AG04450 (cell line): ENCODE measurements at regions of chr3 and their contacts with region 1.

Region 1: GRCh38 chr3:133927540-133928066 is 31.9 kb upstream of the RAB6B start:
- DNase-seq: no peak
- H3K4me3 ChIP-seq: peak overlapping the region; percentile 56
- H3K27ac ChIP-seq: no peak overlapping the region
- H3K27me3 ChIP-seq: no peaks in the 10 kb centered on the region
- CTCF ChIP-seq: peak; percentile 55

Region 2: GRCh38 chr3:133712017-133712416 is 215.6 kb before region 1 on chr3:
- CTCF ChIA-PET with region 1: no interaction called
- POLR2A ChIA-PET with region 1: no interaction called
- DNase-seq: no peak
- H3K4me3 ChIP-seq: no peak overlapping the region
- H3K27ac ChIP-seq: no peak overlapping the region
- H3K27me3 ChIP-seq: peaks cover 12% of the 10 kb centered on the region
- CTCF ChIP-seq: no peak

Region 3: GRCh38 chr3:133821767-133822638 is 105.6 kb before region 1 on chr3:
- CTCF ChIA-PET with region 1: interaction called, 40 read pairs
- POLR2A ChIA-PET with region 1: no interaction called
- DNase-seq: peak; percentile 33
- H3K4me3 ChIP-seq: no peak overlapping the region
- H3K27ac ChIP-seq: no peak overlapping the region
- H3K27me3 ChIP-seq: no peaks in the 10 kb centered on the region
- CTCF ChIP-seq: peak; percentile 45

Region 4: DNA sequence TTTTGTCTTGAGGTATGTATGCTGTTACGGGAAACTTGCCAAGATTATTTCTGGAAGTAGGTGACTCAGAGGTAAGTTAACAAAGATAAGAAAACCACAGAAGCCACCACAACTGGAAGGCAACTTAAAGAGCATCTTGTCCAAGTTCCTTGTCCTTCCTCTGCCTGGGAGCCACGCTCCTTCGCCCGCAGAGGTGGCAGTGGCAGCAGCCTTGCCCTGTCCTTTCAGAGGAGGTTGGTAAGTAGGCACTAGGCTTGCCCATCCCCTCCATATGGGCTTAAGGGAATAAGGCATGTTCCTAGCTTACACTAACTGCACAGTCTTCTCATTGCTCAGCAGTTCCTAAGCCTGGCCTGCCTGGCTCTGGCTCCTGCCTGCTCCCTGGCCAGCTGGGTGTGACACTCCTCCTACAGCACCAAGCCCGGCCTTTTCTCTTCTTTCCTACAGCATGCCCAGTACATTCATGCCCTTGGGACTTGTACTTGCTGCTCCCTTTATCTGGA is 16.1 kb after region 1 on chr3:
- CTCF ChIA-PET with region 1: interaction called, 15 read pairs
- POLR2A ChIA-PET with region 1: no interaction called
- DNase-seq: peak; percentile 87
- H3K4me3 ChIP-seq: no peak overlapping the region
- H3K27ac ChIP-seq: peak overlapping the region; percentile 77
- H3K27me3 ChIP-seq: peaks cover 3% of the 10 kb centered on the region
- CTCF ChIP-seq: no peak

Region 5: DNA sequence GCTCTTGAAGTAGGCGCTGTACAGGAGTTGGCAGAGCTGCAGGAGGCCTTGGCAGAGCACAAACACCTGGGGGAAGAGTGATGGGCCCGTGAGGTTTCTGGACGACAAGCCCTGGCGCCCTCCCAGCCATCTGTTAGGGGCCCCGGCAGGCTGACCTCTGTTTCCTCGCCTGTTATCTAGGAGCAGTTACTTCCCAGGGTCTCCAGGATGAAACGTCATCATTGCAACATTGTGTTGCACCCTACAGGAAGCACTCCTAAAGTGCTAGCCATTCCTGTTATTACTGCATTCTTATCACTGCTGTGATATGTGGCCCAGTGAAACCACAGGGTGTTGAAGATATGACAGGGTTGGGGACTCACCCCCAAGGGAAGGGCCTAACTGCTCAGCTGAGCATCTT is 52.0 kb after region 1 on chr3:
- CTCF ChIA-PET with region 1: no interaction called
- POLR2A ChIA-PET with region 1: no interaction called
- DNase-seq: no peak
- H3K4me3 ChIP-seq: no peak overlapping the region
- H3K27ac ChIP-seq: no peak overlapping the region
- H3K27me3 ChIP-seq: peaks cover 4% of the 10 kb centered on the region
- CTCF ChIP-seq: no peak

Region 6: DNA sequence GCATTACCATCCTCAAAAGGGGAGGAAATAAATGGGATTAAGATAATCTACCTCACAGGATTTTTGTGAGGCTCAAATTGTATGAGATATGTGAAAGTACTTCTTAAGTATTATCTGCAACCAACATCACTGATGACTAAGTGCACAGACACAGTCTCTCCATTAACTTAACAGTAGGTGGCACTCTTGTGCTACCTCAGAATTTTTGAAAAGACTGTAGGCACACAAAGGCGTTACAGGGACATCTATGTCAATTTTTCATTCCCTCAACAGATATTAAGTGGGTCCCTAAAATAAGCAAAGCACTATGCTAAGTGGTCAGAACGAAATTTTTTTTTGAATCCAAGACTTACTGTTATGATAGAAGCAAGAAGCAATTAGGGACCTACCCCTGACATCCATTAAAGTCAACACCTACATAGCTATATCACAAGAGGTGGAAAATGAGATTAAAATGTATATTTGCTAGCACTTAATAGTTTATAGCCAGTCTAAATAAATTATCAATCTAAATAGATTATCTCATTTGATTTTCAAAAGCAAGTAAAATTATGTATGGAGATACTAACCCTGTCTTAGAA is 270.2 kb after region 1 on chr3:
- CTCF ChIA-PET with region 1: interaction called, 28 read pairs
- POLR2A ChIA-PET with region 1: no interaction called
- DNase-seq: peak; percentile 44
- H3K4me3 ChIP-seq: no peak overlapping the region
- H3K27ac ChIP-seq: no peak overlapping the region
- H3K27me3 ChIP-seq: no peaks in the 10 kb centered on the region
- CTCF ChIP-seq: peak; percentile 77